ENCODE measurements at regions of chr21 and their contacts with region 1.

Region 1: GRCh38 chr21:32604464-32604863 is 7.7 kb downstream of the CFAP298 start:
- DNase-seq: no peak
- H3K4me3 ChIP-seq: no peak overlapping the region
- H3K27ac ChIP-seq: no peak overlapping the region
- H3K4me1 ChIP-seq: no peaks in the 10 kb centered on the region
- H3K27me3 ChIP-seq: no peaks in the 10 kb centered on the region
- CTCF ChIP-seq: no peak
- POLR2A ChIP-seq: no peak

Region 2: GRCh38 chr21:32403201-32403777 is 201.2 kb before region 1 on chr21:
- intact Hi-C with region 1: loop called (anchors 5 kb)
- DNase-seq: peak; percentile 65
- H3K4me3 ChIP-seq: no peak overlapping the region
- H3K27ac ChIP-seq: no peak overlapping the region
- H3K4me1 ChIP-seq: no peaks in the 10 kb centered on the region
- H3K27me3 ChIP-seq: no peaks in the 10 kb centered on the region
- CTCF ChIP-seq: peak; percentile 34 to 77 (median 76)
- POLR2A ChIP-seq: no peak